CD8-positive, alpha-beta T cell (primary cell): ENCODE measurements at regions of chr10 and their contacts with region 1.

Region 1: DNA sequence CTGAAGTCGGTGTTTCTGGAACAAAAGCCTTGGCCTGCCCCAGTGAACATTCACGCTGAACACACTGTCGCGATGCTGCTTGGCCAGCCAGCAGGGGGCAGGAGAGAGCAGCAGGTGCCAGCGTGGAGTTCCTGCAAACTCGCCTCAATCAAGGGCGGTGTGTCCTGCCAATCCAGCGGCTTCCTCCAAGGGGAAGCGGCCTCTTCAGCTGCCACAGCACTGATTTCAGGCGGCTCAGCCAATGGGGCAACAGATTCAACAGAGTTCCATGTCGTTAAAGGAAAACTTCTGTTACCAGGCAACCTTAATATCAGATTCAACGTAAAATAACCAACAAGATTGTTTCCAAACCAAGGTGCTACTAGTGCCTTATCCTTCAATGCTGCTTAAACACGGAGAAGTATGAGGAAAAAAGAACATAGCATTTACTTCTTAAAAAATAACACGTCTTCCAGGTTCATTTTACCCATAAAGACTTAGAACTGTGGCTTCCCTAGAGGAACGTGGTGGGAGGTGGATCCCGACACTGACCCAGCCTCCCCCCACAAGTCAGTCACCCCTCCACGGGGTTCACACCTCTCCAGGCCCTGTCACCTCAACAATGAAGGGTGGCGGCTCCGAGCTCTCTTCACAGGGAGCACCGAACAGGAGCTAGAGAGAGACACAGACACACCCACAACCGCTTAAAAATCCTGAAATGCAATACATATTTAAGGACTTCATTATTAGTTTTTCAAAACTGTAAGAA is 178.2 kb downstream of the DIP2C start:
- DNase-seq: peak; percentile 51 to 88 (median 75)
- ATAC-seq: peak; percentile 85
- H3K4me3 ChIP-seq: no peak overlapping the region
- H3K4me3 Mint-ChIP-seq: no peak overlapping the region
- H3K27ac ChIP-seq: no peak overlapping the region
- H3K27ac Mint-ChIP-seq: no peak overlapping the region
- H3K4me1 ChIP-seq: peaks cover 11% of the 10 kb centered on the region
- H3K4me1 Mint-ChIP-seq: peaks cover 14% of the 10 kb centered on the region
- H3K27me3 ChIP-seq: no peaks in the 10 kb centered on the region
- H3K27me3 Mint-ChIP-seq: peaks cover 6% of the 10 kb centered on the region
- CTCF ChIP-seq: peak; percentile 94

Region 2: GRCh38 chr10:500876-501275 is 10.4 kb before region 1 on chr10:
- CTCF ChIA-PET with region 1: interaction called, 14 read pairs
- POLR2A ChIA-PET with region 1: no interaction called
- intact Hi-C with region 1: no loop called
- DNase-seq: no peak
- ATAC-seq: no peak
- H3K4me3 ChIP-seq: no peak overlapping the region
- H3K4me3 Mint-ChIP-seq: peak overlapping the region; percentile 16
- H3K27ac ChIP-seq: no peak overlapping the region
- H3K27ac Mint-ChIP-seq: peak overlapping the region; percentile 29
- H3K4me1 ChIP-seq: peaks cover 16% of the 10 kb centered on the region
- H3K4me1 Mint-ChIP-seq: peaks cover 37% of the 10 kb centered on the region
- H3K27me3 ChIP-seq: no peaks in the 10 kb centered on the region
- H3K27me3 Mint-ChIP-seq: peaks cover 7% of the 10 kb centered on the region
- CTCF ChIP-seq: no peak

Region 3: GRCh38 chr10:1074748-1075308 is 563.6 kb after region 1 on chr10:
- CTCF ChIA-PET with region 1: no interaction called
- POLR2A ChIA-PET with region 1: no interaction called
- intact Hi-C with region 1: loop called in 1 of 2 experiments (anchors 10 kb)
- DNase-seq: peak in 2 of 9 experiments; percentile 36 to 53
- ATAC-seq: peak; percentile 31
- H3K4me3 ChIP-seq: no peak overlapping the region
- H3K4me3 Mint-ChIP-seq: no peak overlapping the region
- H3K27ac ChIP-seq: no peak overlapping the region
- H3K27ac Mint-ChIP-seq: peak overlapping the region; percentile 55
- H3K4me1 ChIP-seq: peaks cover 4% of the 10 kb centered on the region
- H3K4me1 Mint-ChIP-seq: peaks cover 26% of the 10 kb centered on the region
- H3K27me3 ChIP-seq: no peaks in the 10 kb centered on the region
- H3K27me3 Mint-ChIP-seq: no peaks in the 10 kb centered on the region
- CTCF ChIP-seq: peak; percentile 18

Region 4: GRCh38 chr10:2038036-2038435 is 1526.8 kb after region 1 on chr10:
- CTCF ChIA-PET with region 1: no interaction called
- POLR2A ChIA-PET with region 1: no interaction called
- intact Hi-C with region 1: no loop called
- DNase-seq: no peak
- ATAC-seq: no peak
- H3K4me3 ChIP-seq: no peak overlapping the region
- H3K4me3 Mint-ChIP-seq: no peak overlapping the region
- H3K27ac ChIP-seq: no peak overlapping the region
- H3K27ac Mint-ChIP-seq: no peak overlapping the region
- H3K4me1 ChIP-seq: no peaks in the 10 kb centered on the region
- H3K4me1 Mint-ChIP-seq: no peaks in the 10 kb centered on the region
- H3K27me3 ChIP-seq: no peaks in the 10 kb centered on the region
- H3K27me3 Mint-ChIP-seq: no peaks in the 10 kb centered on the region
- CTCF ChIP-seq: no peak